Mucosa of descending colon (tissue), 3 donors: ENCODE measurements at regions of chr12 and their contacts with region 1.

Region 1: GRCh38 chr12:47188576-47189441 is 109.0 kb upstream of the AMIGO2 start:
- DNase-seq: no peak
- ATAC-seq: no peak
- H3K4me3 ChIP-seq: no peak overlapping the region
- H3K4me1 ChIP-seq: no peaks in the 10 kb centered on the region
- CTCF ChIP-seq: no peak

Region 2: GRCh38 chr12:47264951-47265350 is 76.1 kb after region 1 on chr12:
- intact Hi-C with region 1: loop called in 1 of 2 experiments (anchors 5 kb)
- DNase-seq: no peak
- ATAC-seq: no peak
- H3K4me3 ChIP-seq: no peak overlapping the region
- H3K4me1 ChIP-seq: no peaks in the 10 kb centered on the region
- CTCF ChIP-seq: no peak